ENCODE measurements at regions of chr22 and their contacts with region 1.

Region 1: GRCh38 chr22:37316875-37317371 is 34.6 kb downstream of the CYTH4 start:
- DNase-seq: peak in 2 of 3 donors; percentile 71 to 76
- ATAC-seq: peak; percentile 89
- H3K4me3 ChIP-seq: no peak overlapping the region
- H3K4me1 ChIP-seq: no peaks in the 10 kb centered on the region
- CTCF ChIP-seq: peak; percentile 84

Region 2: DNA sequence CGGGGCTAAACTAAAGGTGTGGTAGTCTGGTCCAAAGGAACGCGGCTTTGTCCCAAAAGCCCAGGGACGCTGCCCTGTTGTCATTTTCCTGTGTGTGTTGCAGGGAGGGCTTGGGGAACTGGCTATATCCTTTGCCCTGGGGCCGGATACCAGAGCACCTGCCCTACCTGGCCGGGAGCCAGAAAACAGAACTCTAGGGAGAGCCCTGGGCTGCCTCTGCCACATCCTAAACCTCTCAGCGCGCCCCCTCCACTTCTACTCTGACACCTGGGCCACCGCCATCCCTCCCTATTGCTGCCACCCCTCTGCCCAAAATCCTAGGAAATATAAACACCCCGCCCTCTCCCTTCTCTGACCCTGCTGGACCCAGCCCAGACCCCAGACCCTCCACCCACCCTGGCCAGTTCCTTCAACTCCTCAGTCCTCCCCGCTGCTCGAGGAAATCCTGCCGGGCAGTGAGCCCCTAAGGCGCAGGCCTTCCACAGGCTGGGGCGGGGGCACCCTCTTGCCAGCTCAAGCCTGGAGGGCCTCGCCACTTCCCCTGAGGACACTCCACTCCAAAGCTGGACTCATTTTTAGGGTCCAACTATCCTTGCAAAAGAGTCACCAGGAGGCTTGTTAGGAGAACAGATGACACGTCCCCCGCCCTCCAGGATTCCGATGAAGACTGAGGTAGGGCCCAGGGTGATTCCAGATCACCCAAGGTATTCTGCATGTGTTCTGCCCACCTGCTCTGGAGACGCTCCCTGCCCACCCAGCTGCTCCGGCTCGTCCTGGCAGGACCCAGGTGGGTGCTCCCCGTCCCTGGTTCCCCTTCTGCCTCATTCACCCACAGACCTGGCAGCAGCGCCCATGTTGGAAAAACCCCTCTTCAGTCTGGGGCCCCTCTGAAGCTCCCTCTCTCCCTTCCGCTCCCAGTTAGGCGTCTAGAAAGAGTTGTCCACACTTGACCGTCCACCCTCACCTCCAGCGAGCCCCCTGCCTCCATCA is 253.2 kb before region 1 on chr22:
- intact Hi-C with region 1: no loop called
- DNase-seq: peak in 2 of 3 donors; percentile 53 to 67
- ATAC-seq: peak; percentile 62
- H3K4me3 ChIP-seq: no peak overlapping the region
- H3K4me1 ChIP-seq: peaks cover 8% of the 10 kb centered on the region
- CTCF ChIP-seq: no peak

Region 3: DNA sequence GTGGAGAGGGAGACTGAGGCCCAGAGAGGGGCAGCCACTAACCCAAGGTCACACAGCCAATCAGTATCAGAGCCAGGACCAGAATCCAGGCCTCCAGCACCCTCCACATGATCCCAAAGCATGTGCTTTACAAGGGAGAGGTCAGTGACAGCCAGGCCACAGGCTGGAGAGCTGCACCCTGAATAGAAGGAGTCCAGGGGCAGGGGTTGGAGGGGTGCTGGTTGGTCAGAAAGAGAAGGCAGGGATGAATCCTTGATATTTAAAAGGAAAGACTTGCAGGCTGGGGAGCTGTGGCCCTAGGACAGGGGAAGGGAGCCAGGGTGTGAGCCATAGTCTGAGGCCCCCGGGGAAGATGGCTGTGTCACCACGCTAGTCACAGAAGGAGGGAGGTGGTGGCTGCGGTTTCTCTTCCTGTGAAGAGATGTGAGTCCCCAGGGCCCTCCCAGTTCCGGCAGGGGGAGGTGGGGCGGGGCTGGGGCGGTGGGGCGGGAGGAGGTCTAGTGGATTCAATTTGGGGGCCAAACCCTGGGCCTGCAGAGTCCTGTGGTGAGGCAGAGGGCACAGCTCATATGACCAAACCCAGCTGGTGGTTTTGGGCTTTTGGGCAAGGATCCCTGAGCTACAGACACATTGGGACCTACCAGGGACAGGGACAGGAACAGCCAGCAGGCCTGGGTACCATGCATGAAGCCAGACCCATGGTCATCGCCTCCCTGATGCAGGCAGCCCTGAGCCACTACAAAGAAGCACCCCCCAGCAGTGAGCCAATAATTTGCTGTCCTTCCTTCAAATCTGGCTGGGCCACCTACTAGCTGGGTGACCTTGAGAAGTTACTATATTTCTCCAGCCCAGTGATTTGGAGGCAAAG is 86.9 kb before region 1 on chr22:
- intact Hi-C with region 1: no loop called
- DNase-seq: peak; percentile 69 to 89 (median 69)
- ATAC-seq: peak; percentile 84
- H3K4me3 ChIP-seq: no peak overlapping the region
- H3K4me1 ChIP-seq: peaks cover 13% of the 10 kb centered on the region
- CTCF ChIP-seq: no peak

Region 4: GRCh38 chr22:37428649-37429586 is 112.0 kb after region 1 on chr22:
- intact Hi-C with region 1: loop called in 1 of 2 experiments (anchors 5 kb)
- DNase-seq: peak in 2 of 3 donors; percentile 55 to 62
- ATAC-seq: peak; percentile 50
- H3K4me3 ChIP-seq: no peak overlapping the region
- H3K4me1 ChIP-seq: peaks cover 4% of the 10 kb centered on the region
- CTCF ChIP-seq: peak; percentile 46

Region 5: GRCh38 chr22:37457093-37457893 is 140.4 kb after region 1 on chr22:
- intact Hi-C with region 1: loop called (anchors 5 to 10 kb)
- DNase-seq: peak; percentile 75 to 92 (median 87)
- ATAC-seq: peak; percentile 95
- H3K4me3 ChIP-seq: no peak overlapping the region
- H3K4me1 ChIP-seq: no peaks in the 10 kb centered on the region
- CTCF ChIP-seq: peak; percentile 64

Measured in mucosa of descending colon (tissue), 3 donors.